AG04450 (cell line): ENCODE measurements at regions of chr2 and their contacts with region 1.

Region 1: GRCh38 chr2:105235388-105236054 is 6.0 kb upstream of the GPR45 start:
- DNase-seq: peak; percentile 49
- H3K4me3 ChIP-seq: no peak overlapping the region
- H3K27ac ChIP-seq: no peak overlapping the region
- H3K27me3 ChIP-seq: peaks cover 5% of the 10 kb centered on the region
- CTCF ChIP-seq: peak; percentile 81

Region 2: DNA sequence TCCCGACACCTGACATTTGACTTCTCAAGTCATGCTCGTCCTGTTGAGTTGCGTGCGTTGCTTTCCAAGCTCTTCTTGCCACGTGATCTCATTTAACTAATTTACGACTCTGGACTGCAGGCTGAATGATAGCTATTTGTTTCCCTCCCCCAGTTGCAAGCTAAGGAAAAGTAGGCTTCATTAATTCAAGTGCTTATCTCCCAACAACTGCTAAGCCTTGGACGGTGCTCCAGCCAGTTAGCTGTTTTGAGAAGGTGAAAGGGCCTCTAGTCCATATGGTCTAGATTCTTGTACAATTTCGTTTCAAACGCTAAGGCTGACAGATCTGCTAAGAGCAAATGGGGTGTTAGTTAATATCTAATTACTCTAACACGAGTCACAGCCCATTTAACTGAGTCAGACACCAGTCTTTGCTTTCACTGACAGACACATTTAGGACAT is 27.1 kb after region 1 on chr2:
- CTCF ChIA-PET with region 1: interaction called, 11 read pairs
- POLR2A ChIA-PET with region 1: no interaction called
- DNase-seq: no peak
- H3K4me3 ChIP-seq: no peak overlapping the region
- H3K27ac ChIP-seq: no peak overlapping the region
- H3K27me3 ChIP-seq: no peaks in the 10 kb centered on the region
- CTCF ChIP-seq: no peak

Region 3: GRCh38 chr2:105301646-105302045 is 66.1 kb after region 1 on chr2:
- CTCF ChIA-PET with region 1: interaction called, 13 read pairs
- POLR2A ChIA-PET with region 1: no interaction called
- DNase-seq: no peak
- H3K4me3 ChIP-seq: no peak overlapping the region
- H3K27ac ChIP-seq: no peak overlapping the region
- H3K27me3 ChIP-seq: no peaks in the 10 kb centered on the region
- CTCF ChIP-seq: no peak

Region 4: GRCh38 chr2:105753380-105753779 is 517.9 kb after region 1 on chr2:
- CTCF ChIA-PET with region 1: no interaction called
- POLR2A ChIA-PET with region 1: no interaction called
- DNase-seq: no peak
- H3K4me3 ChIP-seq: no peak overlapping the region
- H3K27ac ChIP-seq: no peak overlapping the region
- H3K27me3 ChIP-seq: no peaks in the 10 kb centered on the region
- CTCF ChIP-seq: no peak